CD4-positive, alpha-beta memory T cell (primary cell): ENCODE measurements at regions of chr2 and their contacts with region 1.

Region 1: DNA sequence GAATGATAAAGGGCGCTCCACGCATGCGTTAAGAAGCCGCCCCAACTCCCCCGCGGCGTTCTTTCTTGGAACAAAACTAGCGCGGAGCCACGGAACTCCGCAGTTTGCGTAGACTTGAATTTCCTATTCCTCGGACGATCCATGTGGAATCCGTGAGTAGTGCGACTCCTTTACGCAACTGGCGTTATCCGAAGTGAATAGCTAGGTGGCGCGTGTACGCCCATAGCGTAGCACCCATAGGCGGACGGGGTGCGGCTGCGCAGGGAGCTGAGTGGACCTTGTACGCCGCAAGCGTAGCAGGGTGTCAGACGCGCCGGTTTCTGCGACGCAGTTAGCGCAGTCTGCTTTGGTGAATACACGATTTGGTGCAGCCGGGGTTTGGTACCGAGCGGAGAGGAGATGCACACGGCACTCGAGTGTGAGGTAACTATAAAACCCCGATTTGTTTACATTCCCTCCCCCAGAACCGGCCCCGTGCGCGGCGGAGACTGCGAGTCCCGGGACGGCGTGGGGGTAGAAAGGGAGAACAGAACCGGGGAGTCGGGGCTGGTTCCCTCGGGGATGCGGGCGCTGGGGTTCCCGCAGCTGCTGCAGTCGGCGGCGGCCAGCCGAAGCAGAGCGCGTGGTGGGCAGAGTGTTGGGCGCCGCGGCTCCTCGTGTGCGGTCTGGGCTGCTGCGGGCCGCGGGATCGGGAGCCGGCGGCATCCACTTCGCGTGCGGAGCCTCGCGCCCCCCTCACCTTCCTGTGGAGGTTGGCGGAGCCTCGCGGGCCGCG is at the start of gene SLC39A10:
- DNase-seq: peak; percentile 96 to 99 (median 97)
- H3K4me3 ChIP-seq: peak within 1 kb of the TSS; percentile 66 to 80
- H3K4me3 Mint-ChIP-seq: peak within 1 kb of the TSS; percentile 96 to 99 (median 99)
- H3K27ac ChIP-seq: peak within 1 kb of the TSS; percentile 99
- H3K27ac Mint-ChIP-seq: peak within 1 kb of the TSS; percentile 97 to 100 (median 99)
- H3K4me1 ChIP-seq: peaks cover 35% of the 10 kb centered on the region
- H3K4me1 Mint-ChIP-seq: peaks cover 18 to 48% (median 22%) of the 10 kb centered on the region in 4 donors
- H3K27me3 ChIP-seq: no peaks in the 10 kb centered on the region
- H3K27me3 Mint-ChIP-seq: peaks cover 0 to 2% of the 10 kb centered on the region in 2 donors
- total RNA-seq, gene SLC39A10: 101 to 102 TPM

Region 2: DNA sequence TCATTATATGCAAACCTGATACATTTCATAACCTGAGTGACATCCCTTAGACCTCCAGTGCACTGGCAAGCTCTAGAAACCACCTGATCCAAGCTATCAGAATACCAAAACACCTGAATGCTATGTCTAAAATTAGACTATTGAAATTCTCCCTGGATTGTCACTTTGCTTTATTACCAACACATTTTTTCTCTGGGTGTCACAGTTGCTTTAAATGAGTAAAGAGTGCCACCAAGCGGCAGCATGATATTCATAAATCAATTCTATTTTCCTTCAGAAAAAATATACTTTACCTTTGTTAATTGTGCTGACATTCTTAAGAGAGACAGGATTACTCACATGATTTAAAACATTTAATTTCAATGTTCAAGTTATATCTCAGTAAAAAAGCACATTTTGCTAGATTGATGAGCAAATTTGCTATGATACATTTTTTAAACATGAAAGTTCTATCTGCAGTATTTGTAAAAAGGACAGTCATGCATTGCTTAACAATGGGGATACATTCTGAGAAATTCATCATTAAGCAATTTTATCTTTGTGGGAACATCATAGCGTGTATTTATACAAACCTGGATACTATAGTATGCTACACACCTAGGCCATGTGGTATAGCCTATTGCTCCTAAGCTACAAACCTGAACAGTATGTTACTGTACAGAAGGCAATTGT is 338.5 kb before region 1 on chr2:
- CTCF ChIA-PET with region 1: interaction called, 12 read pairs
- POLR2A ChIA-PET with region 1: interaction called, 3 read pairs
- intact Hi-C with region 1: loop called (anchors 1 kb)
- DNase-seq: peak; percentile 33 to 48 (median 44)
- H3K4me3 ChIP-seq: no peak overlapping the region
- H3K4me3 Mint-ChIP-seq: no peak overlapping the region
- H3K27ac ChIP-seq: no peak overlapping the region
- H3K27ac Mint-ChIP-seq: no peak overlapping the region
- H3K4me1 ChIP-seq: peaks cover 11% of the 10 kb centered on the region
- H3K4me1 Mint-ChIP-seq: peaks cover 5 to 11% (median 8%) of the 10 kb centered on the region in 4 donors
- H3K27me3 ChIP-seq: no peaks in the 10 kb centered on the region
- H3K27me3 Mint-ChIP-seq: no peaks in the 10 kb centered on the region

Region 3: GRCh38 chr2:195482010-195482409 is 175.0 kb before region 1 on chr2:
- CTCF ChIA-PET with region 1: interaction called, 13 read pairs
- POLR2A ChIA-PET with region 1: interaction called, 8 read pairs
- intact Hi-C with region 1: no loop called
- DNase-seq: no peak
- H3K4me3 ChIP-seq: no peak overlapping the region
- H3K4me3 Mint-ChIP-seq: peak overlapping the region in 1 of 8 donors; percentile 29
- H3K27ac ChIP-seq: no peak overlapping the region
- H3K27ac Mint-ChIP-seq: peak overlapping the region in 1 of 7 donors; percentile 3
- H3K4me1 ChIP-seq: peaks cover 26% of the 10 kb centered on the region
- H3K4me1 Mint-ChIP-seq: peaks cover 16 to 30% (median 22%) of the 10 kb centered on the region in 4 donors
- H3K27me3 ChIP-seq: no peaks in the 10 kb centered on the region
- H3K27me3 Mint-ChIP-seq: peaks cover 0 to 2% of the 10 kb centered on the region in 2 donors

Region 4: DNA sequence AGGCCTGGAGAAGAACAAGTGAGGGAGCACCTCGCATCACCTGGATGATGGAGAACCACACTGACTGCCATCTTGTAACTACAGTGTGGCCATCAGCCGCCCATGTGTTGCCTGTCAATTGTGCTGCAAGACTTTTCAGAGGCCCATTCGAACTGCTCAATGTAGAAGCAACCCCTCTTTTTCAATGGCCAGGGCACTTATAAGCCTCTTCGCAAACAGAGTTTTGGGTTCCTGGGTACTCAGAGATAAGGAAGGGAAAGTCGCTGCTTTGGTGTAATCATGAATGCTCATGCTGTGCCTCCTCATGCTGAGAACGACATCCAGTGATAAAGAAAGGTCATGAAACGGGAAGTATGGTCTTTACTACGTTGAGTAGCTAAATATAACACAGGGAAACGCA is 143.9 kb before region 1 on chr2:
- CTCF ChIA-PET with region 1: interaction called, 18 read pairs
- POLR2A ChIA-PET with region 1: interaction called, 5 read pairs
- intact Hi-C with region 1: no loop called
- DNase-seq: no peak
- H3K4me3 ChIP-seq: no peak overlapping the region
- H3K4me3 Mint-ChIP-seq: no peak overlapping the region
- H3K27ac ChIP-seq: no peak overlapping the region
- H3K27ac Mint-ChIP-seq: no peak overlapping the region
- H3K4me1 ChIP-seq: no peaks in the 10 kb centered on the region
- H3K4me1 Mint-ChIP-seq: peaks cover 0 to 12% (median 8%) of the 10 kb centered on the region in 4 donors
- H3K27me3 ChIP-seq: no peaks in the 10 kb centered on the region
- H3K27me3 Mint-ChIP-seq: no peaks in the 10 kb centered on the region

Region 5: DNA sequence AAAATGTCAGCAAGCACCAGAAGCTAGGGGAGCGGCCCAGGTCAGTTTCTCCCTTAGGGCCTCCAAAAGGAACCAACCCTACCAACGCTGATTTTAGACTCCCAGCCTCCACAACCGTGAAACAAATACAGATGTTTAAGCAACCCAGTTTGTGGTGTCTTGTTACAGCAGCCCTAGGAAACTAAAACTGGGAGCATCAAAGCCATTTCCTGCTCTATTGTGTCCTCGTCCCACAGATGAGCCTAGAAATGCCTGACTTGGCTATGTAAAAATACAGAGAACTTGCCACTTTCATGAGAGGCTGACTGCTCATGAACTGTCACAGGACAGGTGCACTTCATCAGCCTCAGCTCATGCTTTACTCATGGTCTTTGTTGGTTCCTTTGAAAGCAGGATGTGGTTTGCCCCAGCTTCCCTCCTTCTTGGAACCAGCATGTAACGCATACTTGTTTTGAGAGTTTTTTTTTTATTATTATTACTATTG is 97.6 kb before region 1 on chr2:
- CTCF ChIA-PET with region 1: interaction called, 42 read pairs
- POLR2A ChIA-PET with region 1: interaction called, 190 read pairs
- intact Hi-C with region 1: loop called (anchors 1 kb)
- DNase-seq: peak; percentile 87 to 90 (median 89)
- H3K4me3 ChIP-seq: no peak overlapping the region
- H3K4me3 Mint-ChIP-seq: peak overlapping the region; percentile 49 to 85 (median 70)
- H3K27ac ChIP-seq: peak overlapping the region; percentile 31
- H3K27ac Mint-ChIP-seq: peak overlapping the region; percentile 82 to 97 (median 92)
- H3K4me1 ChIP-seq: peaks cover 86% of the 10 kb centered on the region
- H3K4me1 Mint-ChIP-seq: peaks cover 49 to 74% (median 58%) of the 10 kb centered on the region in 4 donors
- H3K27me3 ChIP-seq: no peaks in the 10 kb centered on the region
- H3K27me3 Mint-ChIP-seq: no peaks in the 10 kb centered on the region

Region 6: GRCh38 chr2:195672668-195673067 is 15.6 kb after region 1 on chr2:
- CTCF ChIA-PET with region 1: interaction called, 13 read pairs
- POLR2A ChIA-PET with region 1: interaction called, 26 read pairs
- intact Hi-C with region 1: no loop called
- DNase-seq: no peak
- H3K4me3 ChIP-seq: no peak overlapping the region
- H3K4me3 Mint-ChIP-seq: no peak overlapping the region
- H3K27ac ChIP-seq: no peak overlapping the region
- H3K27ac Mint-ChIP-seq: no peak overlapping the region
- H3K4me1 ChIP-seq: peaks cover 20% of the 10 kb centered on the region
- H3K4me1 Mint-ChIP-seq: peaks cover 23 to 47% (median 32%) of the 10 kb centered on the region in 4 donors
- H3K27me3 ChIP-seq: no peaks in the 10 kb centered on the region
- H3K27me3 Mint-ChIP-seq: no peaks in the 10 kb centered on the region

Region 7: DNA sequence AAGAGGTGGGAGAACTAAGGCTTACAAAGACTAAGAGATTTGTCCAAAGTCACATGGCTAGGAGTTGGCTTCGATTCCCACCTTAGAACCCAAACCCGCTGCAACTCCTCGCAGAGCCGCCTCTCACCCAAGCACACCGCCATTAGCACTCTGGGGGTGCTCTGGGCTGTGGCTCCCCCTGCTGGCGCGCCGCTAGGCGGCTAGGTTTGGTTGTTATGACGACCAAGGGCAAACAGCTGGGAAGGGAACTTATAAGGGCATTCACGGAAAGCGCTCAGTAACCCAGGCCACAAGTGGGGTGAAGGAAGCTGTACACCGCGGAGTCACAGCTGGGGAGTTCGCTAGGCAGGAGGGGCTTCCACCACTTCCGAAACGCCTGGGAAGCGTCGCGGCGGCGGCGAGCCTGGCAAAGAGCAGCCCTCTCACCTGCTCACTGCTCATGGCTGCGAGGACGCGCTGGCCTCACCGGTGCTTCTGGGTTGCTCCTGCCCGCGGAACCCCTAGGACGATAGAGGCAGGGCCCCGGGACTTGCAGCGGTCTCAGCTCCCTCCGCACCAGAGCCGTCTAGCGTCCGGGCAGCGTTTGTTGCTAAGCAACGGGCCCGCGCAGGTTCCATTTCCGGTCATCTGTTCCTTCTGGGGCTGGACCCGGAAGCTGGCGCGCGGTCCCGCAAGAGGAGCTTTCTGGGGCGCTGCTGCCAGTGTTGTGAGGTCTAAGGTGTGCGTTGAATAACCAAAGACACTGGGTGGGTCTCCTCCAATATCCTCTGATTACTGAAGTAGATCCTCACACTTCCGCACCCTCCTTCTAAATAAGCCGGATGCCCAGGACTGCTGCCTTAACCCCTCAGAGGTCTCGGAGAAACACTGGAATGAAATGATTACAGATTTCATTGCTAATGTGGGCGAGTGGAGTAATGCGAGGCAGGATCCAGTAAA is 411.5 kb after region 1 on chr2 and contains the start of gene DNAH7:
- CTCF ChIA-PET with region 1: interaction called, 7 read pairs
- POLR2A ChIA-PET with region 1: interaction called, 5 read pairs
- intact Hi-C with region 1: loop called (anchors 1 kb)
- DNase-seq: peak; percentile 92 to 96 (median 92)
- H3K4me3 ChIP-seq: peak within 1 kb of the TSS; percentile 54 to 68
- H3K4me3 Mint-ChIP-seq: peak within 1 kb of the TSS; percentile 84 to 91 (median 86)
- H3K27ac ChIP-seq: peak within 1 kb of the TSS; percentile 27
- H3K27ac Mint-ChIP-seq: peak within 1 kb of the TSS; percentile 81 to 95 (median 86)
- H3K4me1 ChIP-seq: peaks cover 18% of the 10 kb centered on the region
- H3K4me1 Mint-ChIP-seq: peaks cover 5 to 15% (median 8%) of the 10 kb centered on the region in 4 donors
- H3K27me3 ChIP-seq: no peaks in the 10 kb centered on the region
- H3K27me3 Mint-ChIP-seq: peaks cover 1 to 7% of the 10 kb centered on the region in 2 donors
- total RNA-seq, gene DNAH7: not detected